Sciatic nerve (tissue), 2 donors: ENCODE measurements at regions of chr9 and their contacts with region 1.

Region 1: DNA sequence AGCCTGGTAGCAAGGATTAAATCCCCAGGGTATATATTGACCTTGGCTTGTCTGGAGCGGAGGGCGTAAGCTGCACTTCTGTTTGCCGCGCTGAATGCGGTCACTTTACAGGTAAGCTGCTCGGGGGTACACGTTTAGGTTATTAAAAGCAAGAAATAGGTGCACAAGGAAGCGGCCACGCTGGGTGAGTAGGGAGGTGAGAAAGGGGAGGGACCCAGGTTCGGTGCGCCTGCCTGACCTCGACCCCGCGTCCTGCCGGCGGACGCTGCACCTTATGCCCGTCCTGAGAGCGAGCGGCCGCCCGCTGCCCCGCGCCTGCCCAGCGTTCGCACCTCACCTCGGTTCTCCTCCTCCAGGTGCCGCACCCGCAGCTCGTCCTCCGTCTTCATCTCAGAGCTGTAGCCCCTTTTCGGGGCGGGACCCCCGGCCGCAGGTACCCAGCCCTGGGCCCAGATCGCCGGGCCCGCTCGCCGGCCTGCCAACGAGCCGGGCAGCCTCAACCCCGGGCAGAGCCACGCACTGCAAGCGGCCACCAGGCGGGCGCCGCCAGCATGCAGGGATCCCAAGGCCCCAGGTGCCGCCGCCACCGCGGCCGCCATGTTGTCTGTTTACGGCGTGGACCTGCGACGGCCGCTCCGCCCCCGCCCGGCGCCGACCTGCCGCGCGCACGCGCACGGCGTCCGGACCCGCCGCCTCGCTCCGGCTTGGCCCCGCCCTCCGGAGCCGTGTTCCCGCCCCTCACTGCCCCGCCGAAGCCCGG is at the start of gene AUH:
- DNase-seq: peak; percentile 92
- ATAC-seq: peak; percentile 97
- total RNA-seq, gene AUH: 28.7 TPM

Region 2: GRCh38 chr9:91089405-91090129 is 271.9 kb before region 1 on chr9:
- intact Hi-C with region 1: loop called (anchors 2 kb)
- DNase-seq: no peak
- ATAC-seq: peak; percentile 92

Region 3: DNA sequence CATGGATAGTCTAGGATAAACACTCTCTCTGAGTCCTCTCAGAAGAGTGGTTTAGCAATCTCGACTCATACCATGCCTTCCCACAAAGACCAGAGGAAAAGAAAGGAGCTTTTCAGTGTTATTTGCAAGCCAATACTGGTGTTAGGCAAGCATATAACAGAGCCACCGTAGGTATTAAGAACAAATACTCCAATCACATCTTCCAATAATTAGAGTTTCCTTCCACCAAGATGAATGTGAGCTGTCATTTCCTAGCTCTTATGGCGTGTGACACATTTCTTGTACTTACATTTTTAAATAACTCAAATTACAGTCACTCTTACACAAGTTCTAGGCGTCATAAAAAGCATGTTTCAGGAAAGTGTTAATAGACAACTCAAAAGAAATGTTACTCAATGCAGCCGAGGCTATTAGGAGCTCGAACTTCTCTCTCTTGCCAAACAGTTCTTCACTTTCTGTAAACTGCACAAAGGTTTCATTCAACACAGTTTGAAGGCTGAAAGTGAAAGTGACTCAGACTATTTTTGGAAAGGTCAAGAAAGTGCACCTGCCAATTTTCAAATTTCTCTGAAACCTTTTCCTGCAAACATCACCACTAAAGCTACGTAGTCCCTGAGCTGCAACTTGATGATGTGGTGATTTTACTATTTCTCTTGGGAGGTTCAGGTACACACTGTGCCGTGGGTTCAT is 153.6 kb before region 1 on chr9:
- intact Hi-C with region 1: no loop called
- DNase-seq: no peak
- ATAC-seq: peak; percentile 93